Prostate gland (tissue), 2 donors: ENCODE measurements at regions of chr1 and their contacts with region 1.

Region 1: DNA sequence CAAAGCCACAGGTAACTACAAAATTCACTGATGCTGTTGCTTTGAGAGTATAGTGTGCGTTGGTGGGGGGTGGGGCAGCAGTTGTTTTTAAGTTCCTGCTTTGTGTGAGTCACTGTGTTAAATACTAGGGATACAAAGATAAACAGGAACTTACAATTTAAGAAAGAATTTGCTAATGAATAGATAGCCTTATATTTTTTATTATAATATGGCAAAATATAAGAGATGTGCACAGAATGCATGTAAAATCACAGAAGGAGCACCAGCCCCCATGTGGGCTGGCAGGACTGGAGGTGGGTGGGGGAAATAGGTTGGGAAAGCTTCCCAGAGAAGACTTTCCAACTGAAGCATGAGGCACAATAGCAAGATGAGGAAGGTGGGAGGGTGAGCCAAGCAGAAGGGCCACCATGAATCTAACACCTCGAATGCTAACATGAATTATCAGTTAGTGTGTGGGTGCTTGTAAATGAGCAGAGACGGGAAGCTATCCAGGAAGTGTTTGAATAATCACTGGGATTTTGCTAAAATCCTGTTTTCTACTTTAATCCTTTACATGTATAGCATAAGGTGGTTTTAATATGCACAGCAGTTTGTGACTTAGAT is 57.0 kb upstream of the RAVER2 start:
- DNase-seq: no peak
- H3K4me3 ChIP-seq: no peak overlapping the region
- H3K27ac ChIP-seq: no peak overlapping the region
- H3K4me1 ChIP-seq: no peaks in the 10 kb centered on the region
- H3K27me3 ChIP-seq: no peaks in the 10 kb centered on the region
- CTCF ChIP-seq: no peak
- POLR2A ChIP-seq: no peak

Region 2: GRCh38 chr1:64744492-64745180 is 56.8 kb after region 1 on chr1 and contains the start of gene RAVER2:
- intact Hi-C with region 1: loop called (anchors 5 kb)
- DNase-seq: peak; percentile 84
- H3K4me3 ChIP-seq: peak within 1 kb of the TSS; percentile 68 to 69
- H3K27ac ChIP-seq: peak within 1 kb of the TSS; percentile 81 to 82
- H3K4me1 ChIP-seq: no peaks in the 10 kb centered on the region
- H3K27me3 ChIP-seq: no peaks in the 10 kb centered on the region
- CTCF ChIP-seq: peak in 2 of 4 experiments; percentile 39 to 53
- POLR2A ChIP-seq: peak; percentile 52
- total RNA-seq, gene RAVER2: 11.8 to 18.3 TPM

Region 3: GRCh38 chr1:64839732-64840405 is 152.0 kb after region 1 on chr1:
- intact Hi-C with region 1: no loop called
- DNase-seq: no peak
- H3K4me3 ChIP-seq: no peak overlapping the region
- H3K27ac ChIP-seq: no peak overlapping the region
- H3K4me1 ChIP-seq: no peaks in the 10 kb centered on the region
- H3K27me3 ChIP-seq: no peaks in the 10 kb centered on the region
- CTCF ChIP-seq: no peak
- POLR2A ChIP-seq: no peak